Head of caudate nucleus (tissue), 42 donors: ENCODE measurements at regions of chr1 and their contacts with region 1.

Region 1: GRCh38 chr1:117059678-117060440 is at the start of gene TTF2:
- DNase-seq: peak; percentile 82 to 98 (median 92)

Region 2: DNA sequence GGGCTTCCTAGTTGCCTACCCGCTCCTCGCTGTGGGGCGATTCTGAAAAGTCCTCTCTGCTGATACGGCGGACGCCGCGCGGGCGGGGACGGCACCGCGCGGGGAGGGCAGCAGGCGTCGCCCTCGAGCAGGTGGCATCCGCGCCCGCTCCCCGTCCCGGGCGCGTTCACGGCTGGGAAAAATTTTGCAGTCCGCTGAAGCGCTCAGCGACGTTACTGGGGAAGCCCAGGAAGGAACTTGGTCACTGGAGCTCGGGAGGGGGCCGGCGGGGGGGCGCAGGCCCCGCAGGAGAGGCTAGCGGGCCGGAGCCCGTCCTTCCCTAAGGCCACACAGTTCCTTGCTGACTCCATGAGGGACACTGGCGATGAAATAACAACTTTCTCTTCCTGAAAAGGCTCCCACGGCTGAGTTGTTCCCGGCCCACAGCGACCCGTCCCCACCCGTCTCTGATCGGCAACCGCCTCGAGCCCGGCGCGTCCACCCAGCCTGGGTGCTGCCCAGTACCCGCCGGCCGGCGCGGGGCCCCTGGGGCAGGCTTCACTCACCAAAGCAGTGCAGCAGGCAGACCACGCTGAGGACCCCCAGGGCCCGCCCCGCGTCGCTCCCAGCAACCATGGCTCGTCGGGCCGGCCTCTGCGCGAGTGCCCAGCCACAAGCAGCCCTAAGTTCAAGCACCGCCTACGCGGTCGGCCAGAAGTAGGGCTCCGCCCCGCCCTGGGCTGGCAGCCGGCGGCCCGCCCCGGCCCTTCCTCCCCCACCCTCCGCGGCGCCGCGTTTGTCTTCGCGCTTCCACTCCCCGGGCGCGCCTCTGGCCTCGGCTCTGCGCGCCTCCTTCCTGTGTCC is 489.3 kb before region 1 on chr1 and contains the start of gene CD58:
- intact Hi-C with region 1: loop called (anchors 10 kb)
- DNase-seq: peak; percentile 48 to 89 (median 80)

Region 3: GRCh38 chr1:116737020-116737854 is 322.6 kb before region 1 on chr1:
- intact Hi-C with region 1: loop called (anchors 5 kb)
- DNase-seq: peak in 41 of 42 donors; percentile 22 to 75 (median 55)

Region 4: GRCh38 chr1:116853670-116854402 is 206.0 kb before region 1 on chr1:
- intact Hi-C with region 1: loop called (anchors 5 kb)
- DNase-seq: no peak

Region 5: GRCh38 chr1:117758444-117759316 is 698.8 kb after region 1 on chr1:
- intact Hi-C with region 1: loop called (anchors 10 kb)
- DNase-seq: peak; percentile 36 to 89 (median 75)